ENCODE measurements at regions of chr7 and their contacts with region 1.

Region 1: DNA sequence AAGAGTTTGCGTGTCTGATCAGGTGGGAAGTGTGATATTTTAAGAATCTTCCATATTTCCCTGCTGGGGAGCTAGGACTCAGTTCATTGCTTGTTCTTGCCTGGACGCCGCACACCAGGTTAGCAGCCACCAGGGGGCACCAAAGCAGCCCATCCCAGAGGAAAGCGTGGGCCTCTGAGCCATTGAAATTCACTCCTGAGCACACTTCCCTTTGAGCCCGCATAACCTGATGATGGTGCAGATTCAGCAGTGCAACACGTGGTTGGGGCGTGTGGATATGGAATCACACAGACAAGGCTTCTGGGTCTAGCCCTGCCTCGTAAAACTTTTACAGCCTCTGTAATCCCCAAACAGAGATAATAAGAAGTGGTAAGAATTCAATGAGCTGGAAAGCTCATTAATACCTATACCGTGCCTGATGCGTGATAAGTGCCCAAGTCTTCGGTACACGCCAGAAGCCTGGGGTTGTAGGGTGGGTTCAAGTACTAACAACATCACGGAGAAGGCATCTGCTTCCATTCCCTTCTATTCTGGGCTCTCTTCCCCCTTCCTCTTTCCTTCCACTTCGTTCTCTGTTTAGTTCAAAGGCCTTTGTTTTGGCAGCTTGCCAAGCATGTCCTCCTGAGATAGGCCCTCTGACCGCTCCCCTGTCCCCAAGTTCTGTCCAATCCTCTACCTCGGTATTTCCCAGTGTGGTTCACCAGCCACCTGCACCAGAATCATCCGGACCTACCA is 130.1 kb upstream of the KMT2E start:
- H3K4me3 ChIP-seq: no peak overlapping the region
- H3K27ac ChIP-seq: peak overlapping the region; percentile 21
- H3K4me1 ChIP-seq: no peaks in the 10 kb centered on the region
- CTCF ChIP-seq: peak; percentile 90

Region 2: DNA sequence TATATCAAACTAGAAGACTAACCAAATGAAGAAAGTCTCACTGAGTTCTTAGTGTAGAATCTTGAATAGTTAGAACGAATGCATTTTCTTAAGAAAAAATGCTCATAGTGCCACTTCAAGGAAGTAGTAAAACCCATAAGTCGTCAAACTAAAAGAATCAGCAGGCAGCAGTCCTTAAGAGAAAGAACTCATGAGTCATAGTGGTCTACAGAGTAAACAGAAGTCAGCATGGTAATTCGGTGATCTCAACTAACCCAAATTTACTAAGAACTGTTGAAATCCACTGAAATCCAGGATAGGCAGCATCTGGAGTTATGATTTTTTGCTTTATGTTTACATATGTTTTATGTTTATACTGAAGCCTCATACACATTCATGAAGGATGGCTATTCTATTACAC is 299.3 kb before region 1 on chr7:
- CTCF ChIA-PET with region 1: no interaction called
- POLR2A ChIA-PET with region 1: no interaction called
- H3K4me3 ChIP-seq: no peak overlapping the region
- H3K27ac ChIP-seq: no peak overlapping the region
- H3K4me1 ChIP-seq: no peaks in the 10 kb centered on the region
- CTCF ChIP-seq: no peak

Region 3: GRCh38 chr7:104862719-104863118 is 21.2 kb before region 1 on chr7:
- CTCF ChIA-PET with region 1: interaction called, 36 read pairs
- POLR2A ChIA-PET with region 1: no interaction called
- H3K4me3 ChIP-seq: no peak overlapping the region
- H3K27ac ChIP-seq: no peak overlapping the region
- H3K4me1 ChIP-seq: no peaks in the 10 kb centered on the region
- CTCF ChIP-seq: peak; percentile 64

Region 4: GRCh38 chr7:104873346-104873849 is 10.5 kb before region 1 on chr7:
- CTCF ChIA-PET with region 1: interaction called, 36 read pairs
- POLR2A ChIA-PET with region 1: no interaction called
- H3K4me3 ChIP-seq: no peak overlapping the region
- H3K27ac ChIP-seq: no peak overlapping the region
- H3K4me1 ChIP-seq: no peaks in the 10 kb centered on the region
- CTCF ChIP-seq: no peak

Region 5: DNA sequence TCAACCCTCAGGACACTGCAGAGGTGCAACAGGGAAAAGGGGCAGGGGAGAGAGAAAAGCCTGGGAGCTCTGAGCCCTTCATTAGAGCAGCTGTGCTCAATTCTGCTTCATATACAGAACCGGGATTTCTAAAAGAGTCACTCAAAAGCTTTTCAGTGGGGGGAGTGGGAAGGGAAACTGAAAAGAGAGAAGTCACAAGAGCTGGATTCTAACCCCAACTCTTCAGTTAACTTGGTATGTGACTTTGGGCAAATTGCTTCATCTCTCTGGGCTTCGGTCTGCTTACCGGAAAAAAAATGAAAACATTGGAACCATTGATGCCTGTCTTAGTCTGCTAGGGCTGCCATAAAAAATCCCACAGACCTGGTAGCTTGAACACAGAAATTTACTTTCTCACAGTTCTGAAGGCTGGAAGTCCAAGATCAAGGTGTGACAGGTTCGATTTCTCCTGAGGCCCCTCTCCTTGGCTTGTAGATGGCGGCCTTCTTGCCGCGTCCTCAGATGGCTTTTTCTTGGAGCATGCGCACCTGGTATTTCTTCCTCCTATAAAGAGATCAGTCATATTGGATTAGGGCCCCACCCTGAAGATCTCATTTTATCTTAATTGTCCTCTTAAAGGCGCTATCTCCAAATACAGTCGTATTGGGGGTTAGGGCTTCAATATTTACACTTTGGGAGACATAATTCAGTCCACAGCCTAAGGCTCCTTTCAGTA is 11.8 kb after region 1 on chr7:
- CTCF ChIA-PET with region 1: interaction called, 27 read pairs
- POLR2A ChIA-PET with region 1: no interaction called
- H3K4me3 ChIP-seq: no peak overlapping the region
- H3K27ac ChIP-seq: no peak overlapping the region
- H3K4me1 ChIP-seq: no peaks in the 10 kb centered on the region
- CTCF ChIP-seq: no peak

Region 6: GRCh38 chr7:104908636-104909035 is 24.8 kb after region 1 on chr7:
- CTCF ChIA-PET with region 1: interaction called, 24 read pairs
- POLR2A ChIA-PET with region 1: no interaction called
- H3K4me3 ChIP-seq: no peak overlapping the region
- H3K27ac ChIP-seq: no peak overlapping the region
- H3K4me1 ChIP-seq: no peaks in the 10 kb centered on the region
- CTCF ChIP-seq: no peak

Region 7: DNA sequence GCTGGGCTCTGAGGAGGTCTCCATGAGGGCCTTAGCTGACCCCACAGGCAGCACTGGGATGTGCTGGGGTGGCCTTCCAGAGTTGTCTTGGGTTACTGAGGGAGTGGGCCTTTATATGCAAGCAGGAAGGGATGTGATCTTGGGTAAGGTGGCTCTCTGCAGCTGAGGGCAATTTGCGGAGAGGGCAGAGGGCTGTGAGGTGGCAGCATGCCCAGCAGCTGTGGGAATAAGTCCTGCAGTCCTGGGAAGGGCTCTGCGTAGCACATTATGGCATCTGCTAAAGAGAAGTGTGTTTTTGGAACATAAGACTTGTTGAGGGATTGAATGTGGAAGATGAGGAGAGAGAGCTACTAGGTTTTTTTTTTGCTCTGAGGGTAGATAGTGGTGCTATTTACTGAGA is 30.5 kb after region 1 on chr7:
- CTCF ChIA-PET with region 1: interaction called, 36 read pairs
- POLR2A ChIA-PET with region 1: interaction called, 12 read pairs
- H3K4me3 ChIP-seq: no peak overlapping the region
- H3K27ac ChIP-seq: no peak overlapping the region
- H3K4me1 ChIP-seq: no peaks in the 10 kb centered on the region
- CTCF ChIP-seq: no peak

Region 8: GRCh38 chr7:104923010-104923421 is 39.1 kb after region 1 on chr7:
- CTCF ChIA-PET with region 1: interaction called, 36 read pairs
- POLR2A ChIA-PET with region 1: interaction called, 12 read pairs
- H3K4me3 ChIP-seq: no peak overlapping the region
- H3K27ac ChIP-seq: peak overlapping the region; percentile 27; the same call in 1 of the 2 replicates
- H3K4me1 ChIP-seq: no peaks in the 10 kb centered on the region
- CTCF ChIP-seq: peak; percentile 92

Measured in HEK293 (cell line).